ENCODE measurements at regions of chr14 and their contacts with region 1.

Region 1: DNA sequence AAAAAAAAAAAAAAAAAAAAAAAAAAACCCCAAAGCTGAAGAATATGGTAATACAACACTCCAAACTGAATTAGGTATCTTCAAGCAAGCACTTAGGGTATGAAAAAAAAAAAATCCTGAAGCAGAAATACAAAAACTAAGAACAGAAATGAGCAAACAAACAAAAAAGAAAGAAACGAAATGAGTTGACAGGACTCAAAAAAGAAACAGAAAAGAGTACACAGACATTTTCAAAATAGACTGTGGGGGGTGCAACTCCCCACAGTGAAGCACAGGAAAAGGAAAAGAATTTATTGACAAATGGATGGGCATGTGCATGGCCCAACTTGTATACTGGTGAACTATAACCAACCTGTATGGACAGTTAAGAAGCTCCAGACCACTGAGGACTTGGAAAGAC is 24.6 kb downstream of the RPS6KA5 start:
- DNase-seq: peak; percentile 24
- ATAC-seq: peak; percentile 67
- H3K4me3 ChIP-seq: no peak overlapping the region
- H3K27ac ChIP-seq: no peak overlapping the region; the same call in 1 of the 2 replicates
- H3K4me1 ChIP-seq: peaks cover 13% of the 10 kb centered on the region
- H3K27me3 ChIP-seq: no peaks in the 10 kb centered on the region
- CTCF ChIP-seq: no peak
- EP300 ChIP-seq: no peak
- POLR2A ChIP-seq: no peak
- RAD21 ChIP-seq: no peak

Region 2: DNA sequence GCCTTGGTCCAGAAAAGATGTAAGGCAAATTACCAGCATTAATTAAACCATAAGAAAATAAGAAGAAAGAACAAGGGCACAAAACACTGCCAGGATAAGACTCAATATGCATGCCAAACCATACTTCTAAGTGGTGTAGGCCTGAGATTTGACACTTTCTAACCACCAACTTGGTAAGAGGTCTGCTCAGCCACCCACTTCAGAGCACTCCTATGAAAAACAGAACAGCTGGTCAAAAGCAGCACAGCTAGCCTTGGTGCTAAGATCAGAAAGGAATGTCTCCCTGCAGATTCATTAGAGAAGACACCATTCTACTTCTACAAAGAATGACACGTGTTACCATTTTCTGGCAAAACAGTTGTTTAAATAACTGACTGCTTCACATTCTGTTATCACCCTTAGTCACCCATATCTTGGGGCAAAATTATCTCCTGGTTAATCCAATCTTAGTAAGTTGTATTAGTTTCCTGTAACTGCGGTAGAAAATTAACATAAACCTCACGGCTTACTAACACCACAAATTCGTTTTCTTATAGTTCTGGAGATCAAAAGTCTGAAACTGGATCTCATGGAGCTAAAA is 11.4 kb after region 1 on chr14:
- CTCF ChIA-PET with region 1: interaction called, 5 read pairs
- POLR2A ChIA-PET with region 1: interaction called, 3 read pairs
- RAD21 ChIA-PET with region 1: no interaction called
- SMC1A ChIA-PET with region 1: interaction called, 12 read pairs
- in situ Hi-C with region 1: no loop called
- intact Hi-C with region 1: no loop called
- DNase-seq: no peak
- ATAC-seq: peak; percentile 85
- H3K4me3 ChIP-seq: no peak overlapping the region
- H3K27ac ChIP-seq: no peak overlapping the region
- H3K4me1 ChIP-seq: no peaks in the 10 kb centered on the region
- H3K27me3 ChIP-seq: no peaks in the 10 kb centered on the region
- CTCF ChIP-seq: no peak
- EP300 ChIP-seq: no peak
- POLR2A ChIP-seq: no peak
- RAD21 ChIP-seq: no peak

Measured in GM12878 (cell line).